ENCODE measurements at regions of chrX and their contacts with region 1.

Region 1: GRCh38 chrX:22192417-22193060 is 80.2 kb upstream of the CBLL2 start:
- DNase-seq: peak; percentile 72 to 79
- ATAC-seq: peak; percentile 63
- H3K4me3 ChIP-seq: no peak overlapping the region
- H3K27ac ChIP-seq: no peak overlapping the region
- H3K4me1 ChIP-seq: no peaks in the 10 kb centered on the region
- H3K27me3 ChIP-seq: no peaks in the 10 kb centered on the region

Region 2: GRCh38 chrX:22081475-22082092 is 111.0 kb before region 1 on chrX:
- intact Hi-C with region 1: loop called in 1 of 2 experiments (anchors 5 kb)
- DNase-seq: peak; percentile 70 to 78
- ATAC-seq: no peak
- H3K4me3 ChIP-seq: no peak overlapping the region
- H3K27ac ChIP-seq: no peak overlapping the region
- H3K4me1 ChIP-seq: no peaks in the 10 kb centered on the region
- H3K27me3 ChIP-seq: no peaks in the 10 kb centered on the region

Region 3: GRCh38 chrX:22300130-22300529 is 107.6 kb after region 1 on chrX:
- intact Hi-C with region 1: no loop called
- DNase-seq: no peak
- ATAC-seq: peak; percentile 64
- H3K4me3 ChIP-seq: no peak overlapping the region
- H3K27ac ChIP-seq: no peak overlapping the region
- H3K4me1 ChIP-seq: no peaks in the 10 kb centered on the region
- H3K27me3 ChIP-seq: no peaks in the 10 kb centered on the region

Region 4: GRCh38 chrX:22378296-22378695 is 185.8 kb after region 1 on chrX:
- intact Hi-C with region 1: no loop called
- DNase-seq: no peak
- ATAC-seq: no peak
- H3K4me3 ChIP-seq: no peak overlapping the region
- H3K27ac ChIP-seq: no peak overlapping the region
- H3K4me1 ChIP-seq: no peaks in the 10 kb centered on the region
- H3K27me3 ChIP-seq: no peaks in the 10 kb centered on the region

Measured in aorta (tissue), 5 donors.